Aorta (tissue), 5 donors: ENCODE measurements at regions of chr14 and their contacts with region 1.

Region 1: GRCh38 chr14:65412032-65412846 is at the start of gene FUT8:
- DNase-seq: peak; percentile 98 to 99
- ATAC-seq: peak; percentile 97
- H3K4me3 ChIP-seq: peak within 1 kb of the TSS; percentile 62 to 67
- H3K27ac ChIP-seq: peak within 1 kb of the TSS; percentile 62 to 68
- H3K4me1 ChIP-seq: no peaks in the 10 kb centered on the region
- H3K27me3 ChIP-seq: no peaks in the 10 kb centered on the region
- total RNA-seq, gene FUT8: 21.8 to 32.3 TPM

Region 2: GRCh38 chr14:64986578-64987571 is 425.4 kb before region 1 on chr14 and contains the start of gene FNTB:
- intact Hi-C with region 1: loop called in 1 of 2 experiments (anchors 10 kb)
- DNase-seq: peak; percentile 98
- ATAC-seq: peak; percentile 98
- H3K4me3 ChIP-seq: peak within 1 kb of the TSS; percentile 62 to 78
- H3K27ac ChIP-seq: peak within 1 kb of the TSS in 1 of 2 donors; percentile 81
- H3K4me1 ChIP-seq: no peaks in the 10 kb centered on the region
- H3K27me3 ChIP-seq: no peaks in the 10 kb centered on the region
- total RNA-seq, gene FNTB: 13.2 to 22.5 TPM

Region 3: DNA sequence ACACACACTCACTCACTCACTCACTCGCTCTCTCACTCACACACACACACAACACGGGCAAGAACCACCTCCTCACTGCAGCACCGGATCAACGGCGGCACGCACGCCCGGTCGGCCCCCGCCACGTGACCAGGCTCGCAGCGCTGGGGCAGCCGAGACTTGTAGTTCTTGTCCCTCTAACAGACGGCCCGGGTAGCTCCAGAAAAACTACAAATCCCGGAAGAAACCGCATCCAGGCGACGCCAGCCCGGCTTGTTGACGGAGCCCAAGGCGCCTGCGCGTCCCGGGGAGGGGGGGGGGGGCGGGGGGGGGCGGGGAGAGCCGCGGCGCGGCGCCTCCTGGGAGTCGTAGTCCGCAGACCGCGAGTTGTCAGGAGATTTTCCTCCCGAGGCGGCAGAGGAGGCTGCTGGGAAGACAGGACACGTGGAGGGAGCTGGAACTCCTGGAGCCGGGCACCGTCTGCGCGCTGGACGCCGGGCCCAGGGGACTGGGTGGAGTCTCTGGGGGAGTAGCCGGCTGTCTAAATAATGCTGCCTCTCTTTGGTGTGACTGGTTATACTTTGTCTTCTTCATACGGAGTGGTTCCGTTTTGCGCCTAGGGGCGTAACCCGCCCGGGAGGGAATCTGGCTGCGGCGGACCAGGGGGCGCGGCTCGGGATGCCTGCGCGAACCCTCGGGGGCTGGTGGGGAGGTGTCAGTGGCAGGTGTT is 309.6 kb before region 1 on chr14 and contains the start of gene MAX:
- intact Hi-C with region 1: loop called in 1 of 2 experiments (anchors 5 kb)
- DNase-seq: peak; percentile 99
- ATAC-seq: peak; percentile 98
- H3K4me3 ChIP-seq: peak within 1 kb of the TSS; percentile 77 to 88
- H3K27ac ChIP-seq: no peak within 1 kb of the TSS
- H3K4me1 ChIP-seq: no peaks in the 10 kb centered on the region
- H3K27me3 ChIP-seq: no peaks in the 10 kb centered on the region
- total RNA-seq, gene MAX: 65.6 to 98.0 TPM

Region 4: DNA sequence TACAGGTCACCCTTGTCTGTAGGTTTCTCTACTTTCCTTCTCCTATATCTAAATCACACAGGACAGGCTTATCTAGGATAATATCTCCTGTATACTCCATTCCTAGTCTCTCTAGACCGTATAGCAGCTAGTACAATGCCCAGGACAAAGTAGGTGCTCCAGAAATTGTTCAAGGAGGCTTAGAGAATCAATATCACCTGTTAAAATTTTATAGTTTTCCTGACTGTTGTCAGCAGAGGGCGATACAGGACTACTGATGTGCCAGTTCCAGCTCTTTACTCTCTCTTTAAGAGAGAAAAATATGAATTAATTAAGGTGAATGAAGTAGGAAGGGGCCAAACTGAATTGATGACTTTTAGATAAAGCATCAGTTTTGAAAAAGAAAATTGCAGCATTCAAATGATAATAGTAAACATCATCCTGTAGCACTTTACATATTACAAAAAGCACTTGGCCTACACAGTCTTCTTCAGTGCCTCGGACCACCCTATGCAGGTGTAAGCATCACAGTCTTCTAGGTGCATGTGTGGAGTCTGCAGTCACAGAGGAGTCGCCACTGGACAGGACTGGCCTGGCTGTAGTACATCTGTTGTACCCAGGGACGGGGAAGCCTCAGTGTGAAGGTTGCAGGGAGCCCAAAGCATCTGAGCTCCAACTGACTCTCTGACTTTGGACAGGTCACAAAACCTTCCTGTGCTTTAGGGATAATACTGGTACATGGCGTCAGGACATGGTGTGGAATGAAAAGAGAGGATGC is 248.0 kb before region 1 on chr14:
- intact Hi-C with region 1: loop called in 1 of 2 experiments (anchors 5 kb)
- DNase-seq: no peak
- ATAC-seq: no peak
- H3K4me3 ChIP-seq: no peak overlapping the region
- H3K27ac ChIP-seq: no peak overlapping the region
- H3K4me1 ChIP-seq: peaks cover 0 to 1% of the 10 kb centered on the region in 2 donors
- H3K27me3 ChIP-seq: no peaks in the 10 kb centered on the region

Region 5: GRCh38 chr14:65824285-65824977 is 412.2 kb after region 1 on chr14:
- intact Hi-C with region 1: loop called (anchors 2 to 5 kb)
- DNase-seq: no peak
- ATAC-seq: peak; percentile 77
- H3K4me3 ChIP-seq: no peak overlapping the region
- H3K27ac ChIP-seq: no peak overlapping the region
- H3K4me1 ChIP-seq: no peaks in the 10 kb centered on the region
- H3K27me3 ChIP-seq: no peaks in the 10 kb centered on the region